CD14-positive monocyte (primary cell): ENCODE measurements at regions of chr11 and their contacts with region 1.

Region 1: DNA sequence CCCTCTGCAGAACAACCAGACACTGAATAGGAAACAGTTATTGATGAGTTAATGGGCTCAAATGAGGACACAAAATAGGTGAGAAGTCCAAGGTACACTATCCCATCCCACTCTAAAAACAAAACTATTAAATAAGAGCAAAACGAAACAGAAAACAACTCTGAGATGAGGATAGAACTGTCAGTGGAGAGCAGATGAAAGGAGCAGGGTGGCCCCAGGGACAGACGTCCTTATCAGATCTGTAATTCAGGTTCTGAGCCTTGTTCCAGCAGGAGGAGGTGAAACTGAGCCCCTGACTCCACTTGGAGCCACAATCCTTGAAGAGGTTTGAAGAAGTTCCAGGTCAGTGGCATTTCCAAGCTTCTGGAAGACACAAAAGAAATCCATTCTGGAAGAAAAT is 8.5 kb upstream of the SNX19 start:
- DNase-seq: no peak
- H3K4me3 ChIP-seq: no peak overlapping the region
- H3K4me3 Mint-ChIP-seq: no peak overlapping the region
- H3K27ac ChIP-seq: no peak overlapping the region
- H3K27ac Mint-ChIP-seq: no peak overlapping the region
- H3K4me1 ChIP-seq: no peaks in the 10 kb centered on the region
- H3K4me1 Mint-ChIP-seq: peaks cover 2% of the 10 kb centered on the region
- H3K27me3 ChIP-seq: no peaks in the 10 kb centered on the region
- H3K27me3 Mint-ChIP-seq: peaks cover 3 to 18% (median 14%) of the 10 kb centered on the region in 3 donors
- CTCF ChIP-seq: no peak

Region 2: DNA sequence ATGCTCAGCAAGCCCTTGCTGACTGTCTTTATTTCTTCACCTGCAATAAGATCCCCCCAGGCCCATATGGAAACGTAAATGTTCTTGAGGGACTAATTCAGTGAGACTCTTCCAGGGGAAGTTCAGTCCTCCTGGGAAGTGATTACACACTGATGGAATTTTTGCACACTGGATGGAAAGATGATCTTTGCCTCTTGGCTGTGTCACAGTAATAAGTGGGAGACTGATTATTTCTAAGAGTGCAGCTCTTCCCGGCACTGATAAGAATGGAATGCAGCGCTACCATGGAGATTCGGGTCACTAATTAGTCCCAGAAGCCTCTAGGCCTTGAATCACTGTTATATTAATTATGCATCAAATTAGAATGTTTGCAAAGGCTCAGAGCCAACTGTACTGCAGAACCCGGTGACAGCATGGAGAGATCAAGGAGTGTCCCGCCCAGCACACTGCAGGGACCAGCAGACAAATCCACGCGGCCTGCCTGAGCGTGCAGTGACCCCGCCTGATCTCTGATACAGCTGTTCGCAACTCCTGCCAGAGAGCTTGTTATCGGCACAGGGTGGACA is 186.8 kb before region 1 on chr11:
- intact Hi-C with region 1: no loop called
- DNase-seq: no peak
- H3K4me3 ChIP-seq: no peak overlapping the region
- H3K4me3 Mint-ChIP-seq: no peak overlapping the region
- H3K27ac ChIP-seq: no peak overlapping the region
- H3K27ac Mint-ChIP-seq: no peak overlapping the region
- H3K4me1 ChIP-seq: no peaks in the 10 kb centered on the region
- H3K4me1 Mint-ChIP-seq: no peaks in the 10 kb centered on the region
- H3K27me3 ChIP-seq: no peaks in the 10 kb centered on the region
- H3K27me3 Mint-ChIP-seq: no peaks in the 10 kb centered on the region
- CTCF ChIP-seq: no peak

Region 3: GRCh38 chr11:131674051-131674755 is 749.4 kb after region 1 on chr11:
- intact Hi-C with region 1: loop called (anchors 5 to 10 kb)
- DNase-seq: peak; percentile 12 to 51 (median 48)
- H3K4me3 ChIP-seq: no peak overlapping the region
- H3K4me3 Mint-ChIP-seq: peak overlapping the region in 1 of 2 donors; percentile 11
- H3K27ac ChIP-seq: no peak overlapping the region
- H3K27ac Mint-ChIP-seq: no peak overlapping the region
- H3K4me1 ChIP-seq: no peaks in the 10 kb centered on the region
- H3K4me1 Mint-ChIP-seq: no peaks in the 10 kb centered on the region
- H3K27me3 ChIP-seq: no peaks in the 10 kb centered on the region
- H3K27me3 Mint-ChIP-seq: peaks cover 1 to 6% (median 4%) of the 10 kb centered on the region in 3 donors
- CTCF ChIP-seq: peak; percentile 98